Activated T-helper 1 cell treated with anti-CD3 and anti-CD28 coated beads, Interleukin-12 subunit alpha, Interleukin-12 subunit beta, Interleukin-2, Interleukin-4 antibody, amounts not matched to agents 30 ng/mL and 10 ng/mL and 1 ng/mL, durations not matched to agents 14 hours and 24 hours and 36 hours (primary cell): ENCODE measurements at regions of chr14 and their contacts with region 1.

Region 1: DNA sequence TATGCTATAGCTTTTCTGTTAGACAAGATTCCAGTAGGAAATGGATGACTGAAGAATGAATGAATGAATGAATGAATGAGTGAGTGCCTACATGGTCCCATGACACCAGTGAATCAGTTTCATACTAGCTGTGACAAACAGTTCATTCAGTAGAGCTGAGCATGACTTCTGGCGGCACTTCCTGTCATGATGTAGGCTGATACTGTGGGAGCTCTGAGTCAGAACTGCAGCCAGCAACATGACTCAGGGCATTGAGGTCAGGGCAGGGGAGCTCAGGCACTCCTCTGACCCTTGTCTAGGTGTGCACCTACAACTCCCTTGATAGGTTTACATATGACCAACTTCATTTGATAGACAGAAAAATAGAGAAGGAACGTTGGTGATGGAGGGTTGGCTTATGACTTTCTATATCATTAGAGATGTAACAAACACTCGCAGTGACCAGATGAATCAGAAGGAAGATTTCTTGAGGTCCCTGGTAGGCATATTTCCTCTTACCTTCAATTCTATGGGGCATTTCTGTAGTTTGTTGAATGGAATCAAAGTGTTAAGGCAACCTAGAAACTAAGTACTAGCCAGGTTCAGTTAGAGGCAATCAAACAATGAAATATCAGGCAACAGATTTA is 139.3 kb upstream of the ARHGAP5 start:
- DNase-seq: peak; percentile 64
- H3K4me3 Mint-ChIP-seq: no peak overlapping the region
- H3K27ac Mint-ChIP-seq: peak overlapping the region; percentile 7
- H3K4me1 Mint-ChIP-seq: peaks cover 10% of the 10 kb centered on the region
- H3K27me3 Mint-ChIP-seq: peaks cover 3% of the 10 kb centered on the region

Region 2: DNA sequence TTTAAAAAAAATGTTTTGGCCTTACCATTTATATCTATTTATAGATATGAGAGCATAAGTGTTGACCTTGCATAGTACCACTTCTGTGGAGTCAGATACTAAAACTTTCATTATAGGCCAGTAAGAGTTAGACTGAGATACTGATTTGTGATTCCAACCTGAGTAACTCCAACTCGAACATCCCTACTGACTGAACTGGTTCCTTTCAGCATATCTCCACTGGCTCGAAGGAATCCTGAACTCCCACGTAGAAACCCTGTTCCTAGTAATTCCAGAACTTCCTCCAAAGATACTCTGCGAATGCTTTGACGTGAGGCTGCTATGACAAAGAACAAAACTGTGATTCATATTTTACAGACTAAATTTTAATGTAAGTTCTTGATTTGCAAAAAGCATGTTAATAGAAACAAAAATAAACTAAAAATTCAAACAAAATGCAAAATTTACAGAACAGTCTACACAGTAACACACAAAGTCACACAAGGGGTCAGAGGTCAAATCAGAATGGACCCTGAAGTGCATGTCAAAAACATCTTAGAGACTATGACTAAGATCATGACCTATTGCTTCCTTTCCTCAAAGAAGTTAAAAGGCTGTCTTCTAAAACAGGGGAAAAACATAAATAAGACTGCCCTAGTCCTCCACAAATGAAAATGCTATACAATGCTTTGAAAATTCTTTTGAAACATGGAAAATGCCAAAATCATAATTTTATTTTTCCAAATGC is 549.0 kb before region 1 on chr14:
- intact Hi-C with region 1: loop called (anchors 5 kb)
- DNase-seq: no peak
- H3K4me3 Mint-ChIP-seq: peak overlapping the region; percentile 7
- H3K27ac Mint-ChIP-seq: peak overlapping the region; percentile 93
- H3K4me1 Mint-ChIP-seq: peaks cover 41% of the 10 kb centered on the region
- H3K27me3 Mint-ChIP-seq: no peaks in the 10 kb centered on the region